Adrenal gland (tissue), 19 donors: ENCODE measurements at regions of chr6 and their contacts with region 1.

Region 1: DNA sequence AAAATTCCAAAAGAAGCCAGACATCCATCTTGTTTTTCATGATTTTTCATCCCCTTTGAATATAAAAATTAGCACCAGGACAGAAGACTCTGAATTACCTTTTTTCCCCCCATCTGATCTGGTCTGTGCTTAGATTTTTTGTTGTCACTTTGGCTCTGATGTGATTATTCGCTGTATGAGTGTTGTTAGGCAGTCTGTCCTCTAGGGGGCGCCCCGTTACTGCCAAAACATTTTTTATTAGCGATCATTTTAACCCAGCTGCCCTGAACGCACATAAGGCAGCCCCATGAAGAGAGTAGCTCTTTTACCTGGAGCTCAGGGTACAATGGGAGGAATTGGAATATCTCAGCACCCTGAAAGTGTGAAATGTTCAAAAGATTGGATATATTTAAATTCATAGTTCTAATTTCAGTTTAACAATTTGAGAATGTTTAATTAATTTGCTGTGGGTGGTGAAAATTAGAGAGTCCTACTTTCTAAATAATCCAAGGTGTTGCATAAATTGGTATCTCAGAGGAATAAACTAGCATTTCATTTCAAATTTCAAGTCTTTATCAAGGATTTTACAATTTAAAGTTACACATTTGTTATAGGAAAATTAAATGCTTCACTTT is 60.8 kb downstream of the PRPH2 start:
- DNase-seq: peak; percentile 74 to 96 (median 84)
- H3K4me3 ChIP-seq: no peak overlapping the region
- H3K27ac ChIP-seq: no peak overlapping the region
- H3K4me1 ChIP-seq: peaks cover 0 to 11% of the 10 kb centered on the region in 2 donors
- H3K27me3 ChIP-seq: no peaks in the 10 kb centered on the region
- CTCF ChIP-seq: peak; percentile 84 to 96 (median 91)
- POLR2A ChIP-seq: no peak

Region 2: GRCh38 chr6:42217519-42218367 is 443.9 kb before region 1 on chr6 and contains the start of gene MRPS10:
- intact Hi-C with region 1: no loop called
- DNase-seq: peak; percentile 90 to 98 (median 95)
- H3K4me3 ChIP-seq: peak within 1 kb of the TSS; percentile 8 to 84 (median 78)
- H3K27ac ChIP-seq: peak within 1 kb of the TSS; percentile 12 to 86 (median 54)
- H3K4me1 ChIP-seq: peaks cover 8 to 9% of the 10 kb centered on the region in 2 donors
- H3K27me3 ChIP-seq: no peaks in the 10 kb centered on the region
- CTCF ChIP-seq: no peak
- POLR2A ChIP-seq: peak; percentile 73 to 74
- total RNA-seq, gene MRPS10: 25.5 to 43.2 (median 34.3) TPM

Region 3: GRCh38 chr6:42720739-42721138 is 59.1 kb after region 1 on chr6:
- intact Hi-C with region 1: loop called (anchors 5 kb)
- DNase-seq: no peak
- H3K4me3 ChIP-seq: no peak overlapping the region
- H3K27ac ChIP-seq: no peak overlapping the region
- H3K4me1 ChIP-seq: peaks cover 2% of the 10 kb centered on the region in 2 donors
- H3K27me3 ChIP-seq: no peaks in the 10 kb centered on the region
- CTCF ChIP-seq: no peak
- POLR2A ChIP-seq: no peak

Region 4: GRCh38 chr6:42726485-42727086 is 64.9 kb after region 1 on chr6:
- intact Hi-C with region 1: loop called (anchors 5 kb)
- DNase-seq: peak; percentile 78 to 93 (median 89)
- H3K4me3 ChIP-seq: peak overlapping the region in 2 of 4 donors; percentile 30 to 49
- H3K27ac ChIP-seq: peak overlapping the region in 4 of 5 donors; percentile 52 to 76 (median 60)
- H3K4me1 ChIP-seq: peaks cover 7 to 19% of the 10 kb centered on the region in 2 donors
- H3K27me3 ChIP-seq: no peaks in the 10 kb centered on the region
- CTCF ChIP-seq: peak; percentile 88 to 97 (median 94)
- POLR2A ChIP-seq: no peak

Region 5: GRCh38 chr6:42879372-42880239 is 218.0 kb after region 1 on chr6 and contains the start of gene RPL7L1:
- intact Hi-C with region 1: loop called (anchors 5 to 10 kb)
- DNase-seq: peak; percentile 83 to 94 (median 88)
- H3K4me3 ChIP-seq: peak within 1 kb of the TSS; percentile 71 to 85 (median 77)
- H3K27ac ChIP-seq: peak within 1 kb of the TSS; percentile 83 to 94 (median 90)
- H3K4me1 ChIP-seq: peaks cover 17 to 26% of the 10 kb centered on the region in 2 donors
- H3K27me3 ChIP-seq: no peaks in the 10 kb centered on the region
- CTCF ChIP-seq: peak in 4 of 6 experiments; percentile 16 to 46 (median 38)
- POLR2A ChIP-seq: peak; percentile 12 to 83
- total RNA-seq, gene RPL7L1: 90.2 to 130 (median 94.9) TPM